ENCODE measurements at regions of chr6 and their contacts with region 1.

Region 1: GRCh38 chr6:33139596-33140206 is 52.6 kb downstream of the COL11A2 start:
- DNase-seq: no peak
- H3K4me3 ChIP-seq: no peak overlapping the region
- H3K27ac ChIP-seq: no peak overlapping the region
- H3K4me1 ChIP-seq: peaks cover 0 to 17% (median 15%) of the 10 kb centered on the region in 4 experiments
- H3K27me3 ChIP-seq: no peaks in the 10 kb centered on the region

Region 2: GRCh38 chr6:33034554-33034953 is 105.1 kb before region 1 on chr6:
- CTCF ChIA-PET with region 1: no interaction called
- POLR2A ChIA-PET with region 1: no interaction called
- DNase-seq: no peak
- H3K4me3 ChIP-seq: no peak overlapping the region
- H3K27ac ChIP-seq: no peak overlapping the region
- H3K4me1 ChIP-seq: peaks cover 0 to 11% (median 7%) of the 10 kb centered on the region in 4 experiments
- H3K27me3 ChIP-seq: no peaks in the 10 kb centered on the region

Region 3: DNA sequence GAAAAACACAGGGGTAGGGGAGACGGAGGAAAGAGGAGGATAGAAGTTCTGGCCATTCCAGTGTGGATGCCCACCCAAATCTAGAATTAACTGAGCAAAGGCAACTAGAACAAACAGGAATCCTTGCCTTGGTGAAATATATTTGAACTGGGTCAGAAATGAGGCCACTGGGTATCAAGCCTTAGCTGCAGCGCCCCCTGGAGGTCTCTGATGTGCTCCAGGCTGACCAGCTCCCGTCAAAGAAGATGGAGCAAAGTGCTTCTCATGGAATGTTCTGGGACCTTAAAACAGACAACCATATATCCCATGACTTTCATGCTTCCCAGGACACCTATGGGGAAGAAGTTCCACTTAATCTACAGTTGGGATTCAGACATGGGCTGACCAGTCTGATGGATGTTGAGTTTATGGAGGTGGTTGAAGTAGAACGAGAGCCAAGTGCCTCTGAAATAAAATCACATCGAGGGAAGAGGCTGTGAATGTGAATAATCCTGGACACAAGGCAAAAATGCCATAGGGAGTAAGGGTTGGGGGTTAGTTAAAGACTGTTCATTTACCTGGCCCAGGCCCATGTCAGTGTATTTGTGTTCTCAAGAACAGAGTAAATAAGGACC is 13.5 kb before region 1 on chr6:
- CTCF ChIA-PET with region 1: interaction called, 238 read pairs
- POLR2A ChIA-PET with region 1: no interaction called
- DNase-seq: peak; percentile 51 to 78 (median 66)
- H3K4me3 ChIP-seq: no peak overlapping the region
- H3K27ac ChIP-seq: no peak overlapping the region
- H3K4me1 ChIP-seq: no peaks in the 10 kb centered on the region
- H3K27me3 ChIP-seq: no peaks in the 10 kb centered on the region

Region 4: GRCh38 chr6:33299237-33299944 is 159.7 kb after region 1 on chr6:
- CTCF ChIA-PET with region 1: no interaction called
- POLR2A ChIA-PET with region 1: no interaction called
- DNase-seq: peak; percentile 92 to 97 (median 97)
- H3K4me3 ChIP-seq: peak overlapping the region; percentile 62 to 94 (median 87)
- H3K27ac ChIP-seq: peak overlapping the region; percentile 81 to 93
- H3K4me1 ChIP-seq: peaks cover 0 to 31% (median 27%) of the 10 kb centered on the region in 4 experiments
- H3K27me3 ChIP-seq: no peaks in the 10 kb centered on the region

Measured in common myeloid progenitor, CD34-positive (primary cell).